ENCODE measurements at regions of chr3 and their contacts with region 1.

Region 1: GRCh38 chr3:42635111-42635510 is 18.4 kb upstream of the ZBTB47 start:
- DNase-seq: peak; percentile 51 to 81 (median 76)
- H3K4me3 ChIP-seq: no peak overlapping the region
- H3K27ac ChIP-seq: peak overlapping the region in 1 of 2 experiments; percentile 21
- H3K4me1 ChIP-seq: no peaks in the 10 kb centered on the region
- H3K27me3 ChIP-seq: no peaks in the 10 kb centered on the region

Region 2: DNA sequence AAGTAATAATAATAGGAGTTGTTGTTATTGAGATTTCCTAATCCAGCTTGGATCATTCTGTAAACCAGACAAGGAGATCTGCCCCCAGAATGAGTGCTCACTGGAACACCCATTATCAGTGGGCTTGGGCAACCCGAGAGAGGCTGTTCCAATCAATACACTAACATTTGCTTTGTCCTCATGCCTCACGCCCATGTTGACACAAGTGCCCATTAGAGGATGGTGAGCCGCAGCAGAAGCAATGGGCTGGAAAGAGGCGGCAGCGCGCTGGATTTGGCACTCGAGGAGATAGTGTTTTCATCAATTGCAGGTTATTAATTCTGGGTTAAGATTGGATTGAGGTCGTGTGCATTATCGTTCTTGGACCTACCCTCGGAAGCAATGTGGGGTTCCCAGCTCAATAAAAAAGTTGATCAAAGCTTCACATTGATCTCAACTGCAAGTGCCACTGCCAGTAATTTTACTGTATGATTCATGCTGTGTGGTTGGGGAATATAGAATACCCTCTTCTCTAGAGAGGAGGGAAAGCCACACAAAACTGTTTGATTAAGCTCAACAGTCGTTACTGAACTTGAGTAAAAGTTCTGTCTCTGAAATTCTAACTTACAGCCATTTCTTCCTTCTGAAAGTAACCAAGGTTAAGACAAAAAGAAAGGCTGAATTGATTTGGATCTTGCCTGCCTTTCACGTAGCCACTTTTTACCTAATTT is 240.4 kb before region 1 on chr3:
- CTCF ChIA-PET with region 1: no interaction called
- POLR2A ChIA-PET with region 1: no interaction called
- DNase-seq: no peak
- H3K4me3 ChIP-seq: no peak overlapping the region
- H3K27ac ChIP-seq: no peak overlapping the region
- H3K4me1 ChIP-seq: no peaks in the 10 kb centered on the region
- H3K27me3 ChIP-seq: peaks cover 0 to 3% (median 0%) of the 10 kb centered on the region in 5 experiments

Region 3: GRCh38 chr3:42652611-42653302 is 17.6 kb after region 1 on chr3:
- CTCF ChIA-PET with region 1: interaction called, 13 read pairs
- POLR2A ChIA-PET with region 1: no interaction called
- DNase-seq: peak; percentile 42 to 82 (median 74)
- H3K4me3 ChIP-seq: peak overlapping the region in 3 of 7 experiments; percentile 5 to 84 (median 72)
- H3K27ac ChIP-seq: no peak overlapping the region
- H3K4me1 ChIP-seq: peaks cover 6 to 34% (median 32%) of the 10 kb centered on the region in 4 experiments
- H3K27me3 ChIP-seq: no peaks in the 10 kb centered on the region